ENCODE measurements at regions of chr11 and their contacts with region 1.

Region 1: GRCh38 chr11:67317205-67317887 is 14.0 kb downstream of the SSH3 start:
- DNase-seq: peak; percentile 89
- ATAC-seq: peak; percentile 89
- H3K4me3 ChIP-seq: peak overlapping the region; percentile 67
- H3K27ac ChIP-seq: peak overlapping the region; percentile 42
- H3K4me1 ChIP-seq: 0 out of 2 replicates have a peak, but pooled peaks cover 2% of the 10 kb centered on the region
- H3K27me3 ChIP-seq: no peaks in the 10 kb centered on the region
- CTCF ChIP-seq: peak; percentile 99
- POLR2A ChIP-seq: peak; percentile 62; the same call in 1 of the 2 replicates
- RAD21 ChIP-seq: peak; percentile 96

Region 2: DNA sequence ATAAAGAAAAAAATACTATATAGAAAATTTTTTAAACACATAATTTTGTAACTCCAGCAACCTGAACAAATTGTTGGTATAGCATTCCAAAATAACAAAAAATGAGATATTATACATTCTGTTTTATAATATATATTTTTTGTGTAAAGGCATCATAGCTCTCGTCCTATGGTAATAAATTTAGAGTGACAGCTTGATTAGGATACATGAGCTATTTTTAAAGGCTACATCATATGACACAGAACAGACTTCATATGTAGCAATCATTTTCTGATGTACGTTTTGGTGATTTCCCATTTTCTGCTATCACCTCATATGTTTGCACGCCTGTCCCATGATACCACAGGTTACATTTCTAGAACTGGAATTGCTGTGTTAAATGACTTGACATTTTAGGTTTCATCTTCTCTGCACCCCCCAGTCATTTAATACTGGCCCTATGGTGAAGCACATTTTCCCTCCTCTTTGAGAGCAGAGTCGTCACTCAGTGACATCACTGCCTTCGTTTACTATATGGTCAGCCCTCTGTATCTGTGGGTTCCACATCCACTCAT is 378.7 kb before region 1 on chr11:
- CTCF ChIA-PET with region 1: no interaction called
- POLR2A ChIA-PET with region 1: no interaction called
- dilution Hi-C with region 1: no loop called
- in situ Hi-C with region 1: no loop called
- intact Hi-C with region 1: no loop called
- DNase-seq: no peak
- ATAC-seq: no peak
- H3K4me3 ChIP-seq: no peak overlapping the region
- H3K27ac ChIP-seq: no peak overlapping the region
- H3K4me1 ChIP-seq: peaks cover 16% of the 10 kb centered on the region
- H3K27me3 ChIP-seq: no peaks in the 10 kb centered on the region
- CTCF ChIP-seq: no peak
- POLR2A ChIP-seq: no peak
- RAD21 ChIP-seq: no peak

Region 3: GRCh38 chr11:67082035-67082791 is 235.1 kb before region 1 on chr11:
- CTCF ChIA-PET with region 1: interaction called, 5 read pairs
- POLR2A ChIA-PET with region 1: no interaction called
- dilution Hi-C with region 1: no loop called
- in situ Hi-C with region 1: loop called (anchors 10 kb)
- intact Hi-C with region 1: loop called (anchors 1 kb)
- DNase-seq: no peak
- ATAC-seq: no peak
- H3K4me3 ChIP-seq: no peak overlapping the region
- H3K27ac ChIP-seq: no peak overlapping the region
- H3K4me1 ChIP-seq: no peaks in the 10 kb centered on the region; the same call in 1 of the 2 replicates
- H3K27me3 ChIP-seq: peaks cover 2% of the 10 kb centered on the region; the same call in 1 of the 2 replicates
- CTCF ChIP-seq: no peak
- POLR2A ChIP-seq: no peak
- RAD21 ChIP-seq: no peak

Region 4: GRCh38 chr11:67277231-67277961 is 40.0 kb before region 1 on chr11:
- CTCF ChIA-PET with region 1: no interaction called
- POLR2A ChIA-PET with region 1: no interaction called
- dilution Hi-C with region 1: no loop called
- in situ Hi-C with region 1: no loop called
- intact Hi-C with region 1: no loop called
- DNase-seq: peak; percentile 64
- ATAC-seq: peak; percentile 96
- H3K4me3 ChIP-seq: peak overlapping the region; percentile 31
- H3K27ac ChIP-seq: peak overlapping the region; percentile 93
- H3K4me1 ChIP-seq: peaks cover 22% of the 10 kb centered on the region
- H3K27me3 ChIP-seq: no peaks in the 10 kb centered on the region
- CTCF ChIP-seq: no peak
- POLR2A ChIP-seq: no peak
- RAD21 ChIP-seq: no peak

Measured in IMR-90 (cell line).